ENCODE measurements at regions of chr5 and their contacts with region 1.

Region 1: GRCh38 chr5:6732634-6733410 is 19.6 kb downstream of the TENT4A start:
- DNase-seq: peak; percentile 71 to 89
- ATAC-seq: peak; percentile 65
- H3K4me3 ChIP-seq: no peak overlapping the region
- H3K27ac ChIP-seq: peak overlapping the region in 1 of 2 donors; percentile 65
- H3K4me1 ChIP-seq: peaks cover 0 to 3% of the 10 kb centered on the region in 2 donors
- H3K27me3 ChIP-seq: no peaks in the 10 kb centered on the region

Region 2: DNA sequence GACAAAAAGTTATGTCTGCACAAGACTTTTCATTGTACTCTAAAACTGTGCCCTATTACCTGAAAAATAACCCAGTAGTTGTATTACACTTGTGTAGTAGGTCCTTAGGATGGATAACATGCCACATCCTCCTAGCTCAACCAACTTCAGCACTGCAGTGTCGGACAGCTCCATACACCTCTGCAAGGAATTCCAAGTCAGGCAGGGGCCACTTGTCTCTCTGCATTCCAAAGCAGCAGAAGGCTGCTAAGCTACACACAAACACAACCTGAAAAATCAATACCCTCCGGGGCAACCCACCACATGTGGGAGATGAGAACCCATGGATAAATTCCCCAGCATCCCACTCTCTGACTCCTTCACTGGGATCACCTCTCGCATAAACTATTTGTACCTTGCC is 404.6 kb before region 1 on chr5:
- intact Hi-C with region 1: no loop called
- DNase-seq: no peak
- ATAC-seq: no peak
- H3K4me3 ChIP-seq: no peak overlapping the region
- H3K27ac ChIP-seq: no peak overlapping the region
- H3K4me1 ChIP-seq: no peaks in the 10 kb centered on the region
- H3K27me3 ChIP-seq: no peaks in the 10 kb centered on the region

Region 3: GRCh38 chr5:6712577-6713275 is 20.1 kb before region 1 on chr5:
- intact Hi-C with region 1: loop called in 1 of 2 experiments (anchors 1 kb)
- DNase-seq: peak; percentile 98 to 99
- ATAC-seq: peak; percentile 95
- H3K4me3 ChIP-seq: peak overlapping the region; percentile 56 to 62
- H3K27ac ChIP-seq: peak overlapping the region; percentile 51 to 81
- H3K4me1 ChIP-seq: peaks cover 4 to 7% of the 10 kb centered on the region in 2 donors
- H3K27me3 ChIP-seq: no peaks in the 10 kb centered on the region

Measured in aorta (tissue), 5 donors.